ENCODE measurements at regions of chr19 and their contacts with region 1.

Region 1: DNA sequence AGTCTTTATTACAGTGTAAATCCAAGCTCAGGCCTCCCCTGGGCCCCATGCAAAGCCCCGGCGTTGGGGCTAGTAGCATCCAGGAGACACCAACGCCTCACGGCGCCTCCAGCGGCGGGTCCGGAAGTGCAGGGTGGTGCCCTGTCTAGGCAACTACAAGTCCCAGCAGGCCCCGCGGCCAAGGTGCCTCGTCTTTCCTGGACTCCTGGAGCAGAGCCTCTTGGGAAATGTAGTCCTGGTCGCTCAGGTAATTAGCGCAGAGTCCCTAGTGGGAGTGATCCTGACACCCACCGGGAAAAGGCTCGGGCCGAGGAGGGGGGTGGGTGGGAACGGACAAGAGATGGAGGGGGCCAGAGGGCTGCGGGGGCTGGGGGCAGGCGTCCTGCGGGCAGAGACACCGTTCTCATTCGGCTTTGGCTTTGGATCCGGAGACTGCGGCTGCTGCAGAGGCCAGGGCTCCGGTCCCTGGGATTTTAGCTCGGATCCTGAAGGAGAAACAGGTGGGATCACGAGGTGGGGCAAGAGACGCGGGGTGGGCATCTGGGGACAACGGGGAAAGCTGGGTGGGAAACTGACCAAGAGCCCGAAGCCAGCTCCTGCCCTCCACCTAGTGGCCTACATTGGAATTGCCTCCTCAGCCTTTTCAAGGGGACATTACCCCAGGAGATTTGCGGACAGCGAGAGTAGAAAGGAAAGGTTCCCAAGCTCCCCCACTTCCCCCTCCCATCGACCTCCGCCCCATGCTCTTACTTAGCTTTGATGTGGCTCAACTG is 11.4 kb downstream of the RTN2 start:
- DNase-seq: peak; percentile 92 to 98 (median 95)
- H3K4me3 ChIP-seq: peak overlapping the region; percentile 94
- H3K4me3 Mint-ChIP-seq: peak overlapping the region; percentile 90 to 98 (median 94)
- H3K27ac ChIP-seq: peak overlapping the region; percentile 44
- H3K27ac Mint-ChIP-seq: peak overlapping the region in 7 of 8 donors; percentile 23 to 91 (median 78)
- H3K4me1 ChIP-seq: no peaks in the 10 kb centered on the region
- H3K4me1 Mint-ChIP-seq: peaks cover 8 to 10% (median 10%) of the 10 kb centered on the region in 3 donors
- H3K27me3 ChIP-seq: no peaks in the 10 kb centered on the region
- H3K27me3 Mint-ChIP-seq: peaks cover 0 to 10% of the 10 kb centered on the region in 2 donors

Region 2: DNA sequence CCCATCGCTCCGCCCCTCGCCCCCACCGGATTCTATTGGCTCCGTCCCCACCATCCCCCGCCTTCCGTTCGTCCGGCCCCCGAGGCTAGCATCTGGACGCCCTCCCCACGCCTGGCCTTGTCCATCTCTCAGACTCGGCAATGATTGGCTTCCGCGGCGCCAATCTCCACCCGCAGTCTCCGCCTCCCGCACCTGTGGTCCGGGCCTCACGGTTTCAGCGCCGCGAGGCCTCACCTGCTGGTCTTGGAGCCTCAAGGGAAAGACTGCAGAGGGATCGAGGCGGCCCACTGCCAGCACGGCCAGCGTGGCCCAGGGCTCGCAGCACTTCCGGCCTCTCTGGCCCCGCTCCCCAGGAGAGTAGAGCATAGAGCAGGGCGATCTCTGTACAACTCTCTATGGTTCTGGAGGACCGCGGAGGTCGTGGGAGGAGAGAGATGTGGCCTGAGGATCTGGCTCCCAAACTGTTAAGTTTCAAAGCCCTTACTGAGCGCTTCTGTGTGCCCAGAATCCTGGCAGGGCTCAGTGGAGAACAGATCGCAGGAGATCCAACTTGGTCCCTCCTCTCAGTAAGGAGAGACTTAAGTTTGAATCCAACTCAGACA is 61.8 kb before region 1 on chr19 and contains the start of gene ERCC1:
- CTCF ChIA-PET with region 1: interaction called, 75 read pairs
- POLR2A ChIA-PET with region 1: interaction called, 6 read pairs
- DNase-seq: peak in 3 of 5 donors; percentile 81 to 88 (median 86)
- H3K4me3 ChIP-seq: peak within 1 kb of the TSS; percentile 80
- H3K4me3 Mint-ChIP-seq: peak within 1 kb of the TSS; percentile 85 to 99 (median 91)
- H3K27ac ChIP-seq: peak within 1 kb of the TSS; percentile 79
- H3K27ac Mint-ChIP-seq: peak within 1 kb of the TSS; percentile 63 to 97 (median 92)
- H3K4me1 ChIP-seq: peaks cover 26% of the 10 kb centered on the region
- H3K4me1 Mint-ChIP-seq: peaks cover 41 to 65% (median 46%) of the 10 kb centered on the region in 3 donors
- H3K27me3 ChIP-seq: no peaks in the 10 kb centered on the region
- H3K27me3 Mint-ChIP-seq: peaks cover 0 to 2% of the 10 kb centered on the region in 2 donors
- total RNA-seq, gene ERCC1: 75.7 to 82.6 TPM

Region 3: DNA sequence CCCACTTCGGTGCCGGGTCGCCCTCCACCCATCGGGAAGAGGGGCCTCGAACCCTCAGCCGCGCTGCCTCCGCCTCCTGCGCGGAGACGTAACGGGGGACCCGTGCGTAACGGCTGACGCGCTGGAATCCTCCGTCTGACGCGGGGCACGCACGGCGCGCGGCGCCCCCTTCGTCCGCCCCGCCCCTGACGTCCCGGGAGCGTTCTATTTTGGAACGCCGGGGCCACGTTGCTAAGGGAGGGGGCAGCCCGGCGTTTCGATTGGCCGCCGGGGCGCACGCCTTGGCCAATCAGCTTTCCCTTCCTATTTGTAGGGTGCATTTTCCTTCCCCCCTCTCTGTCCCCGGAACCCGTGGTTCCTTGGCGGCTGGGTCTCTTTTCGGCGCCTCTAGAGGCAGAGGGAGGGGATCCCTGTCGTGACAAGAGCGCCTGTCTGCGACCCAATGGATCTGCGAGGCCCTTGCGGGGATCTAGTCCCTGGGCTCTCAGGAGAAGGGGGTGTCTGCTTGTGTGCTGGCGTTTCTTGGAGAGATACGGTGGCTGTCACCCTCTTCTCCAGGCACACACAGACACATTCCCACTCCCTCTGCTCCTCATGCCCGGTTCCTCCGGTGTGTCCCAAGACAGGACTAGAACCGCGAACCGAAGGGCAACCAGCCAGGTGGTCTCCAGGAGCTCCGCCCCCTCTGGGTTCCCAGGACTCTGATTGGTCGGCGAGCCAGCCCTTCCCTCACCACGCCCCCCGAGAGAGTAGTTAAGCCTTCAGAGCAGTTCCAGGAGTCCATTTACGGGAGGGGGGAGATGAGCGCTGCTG is 16.2 kb before region 1 on chr19:
- CTCF ChIA-PET with region 1: interaction called, 24 read pairs
- POLR2A ChIA-PET with region 1: interaction called, 6 read pairs
- DNase-seq: peak; percentile 78 to 98 (median 93)
- H3K4me3 ChIP-seq: peak overlapping the region; percentile 96
- H3K4me3 Mint-ChIP-seq: peak overlapping the region; percentile 93 to 99 (median 95)
- H3K27ac ChIP-seq: peak overlapping the region; percentile 100
- H3K27ac Mint-ChIP-seq: peak overlapping the region; percentile 98 to 99 (median 99)
- H3K4me1 ChIP-seq: peaks cover 18% of the 10 kb centered on the region
- H3K4me1 Mint-ChIP-seq: peaks cover 26 to 53% (median 29%) of the 10 kb centered on the region in 3 donors
- H3K27me3 ChIP-seq: no peaks in the 10 kb centered on the region
- H3K27me3 Mint-ChIP-seq: peaks cover 10 to 61% of the 10 kb centered on the region in 2 donors

Region 4: DNA sequence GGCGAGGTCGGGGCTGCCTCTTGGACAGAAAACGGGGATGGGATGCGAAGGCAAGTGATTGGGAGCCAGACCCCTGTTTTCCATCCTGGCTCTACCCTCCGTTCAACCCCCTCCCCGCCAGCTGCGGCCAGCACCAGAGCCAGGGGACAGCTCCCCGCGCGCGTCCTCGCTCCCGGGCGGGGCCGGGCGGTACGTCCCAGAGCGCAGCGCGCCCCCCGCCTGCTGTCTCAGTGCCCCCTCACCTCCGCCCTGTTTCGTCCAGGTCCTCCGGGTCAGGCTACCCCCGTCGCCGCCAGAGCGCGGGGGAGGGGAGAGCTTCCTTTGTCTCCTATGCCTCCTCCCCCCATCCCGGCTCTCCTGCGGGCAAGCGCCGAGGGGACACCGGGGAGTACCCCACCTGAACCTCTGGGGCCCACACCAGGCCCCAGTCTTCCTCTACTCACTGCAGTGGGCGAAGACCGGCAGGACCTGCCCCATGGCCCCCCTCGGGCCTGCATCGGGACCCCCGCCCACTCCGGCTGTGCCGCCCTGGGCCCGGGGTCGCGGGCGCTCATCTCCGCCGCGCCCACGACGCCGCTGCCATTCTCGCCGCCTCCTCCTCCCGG is 11.0 kb after region 1 on chr19:
- CTCF ChIA-PET with region 1: interaction called, 47 read pairs
- POLR2A ChIA-PET with region 1: interaction called, 3 read pairs
- DNase-seq: peak in 3 of 5 donors; percentile 38 to 71 (median 62)
- H3K4me3 ChIP-seq: peak overlapping the region; percentile 47
- H3K4me3 Mint-ChIP-seq: peak overlapping the region; percentile 33 to 90 (median 82)
- H3K27ac ChIP-seq: no peak overlapping the region
- H3K27ac Mint-ChIP-seq: peak overlapping the region in 3 of 8 donors; percentile 43 to 81 (median 53)
- H3K4me1 ChIP-seq: peaks cover 41% of the 10 kb centered on the region
- H3K4me1 Mint-ChIP-seq: peaks cover 31 to 48% (median 46%) of the 10 kb centered on the region in 3 donors
- H3K27me3 ChIP-seq: peaks cover 15% of the 10 kb centered on the region
- H3K27me3 Mint-ChIP-seq: peaks cover 14 to 22% of the 10 kb centered on the region in 2 donors

Region 5: DNA sequence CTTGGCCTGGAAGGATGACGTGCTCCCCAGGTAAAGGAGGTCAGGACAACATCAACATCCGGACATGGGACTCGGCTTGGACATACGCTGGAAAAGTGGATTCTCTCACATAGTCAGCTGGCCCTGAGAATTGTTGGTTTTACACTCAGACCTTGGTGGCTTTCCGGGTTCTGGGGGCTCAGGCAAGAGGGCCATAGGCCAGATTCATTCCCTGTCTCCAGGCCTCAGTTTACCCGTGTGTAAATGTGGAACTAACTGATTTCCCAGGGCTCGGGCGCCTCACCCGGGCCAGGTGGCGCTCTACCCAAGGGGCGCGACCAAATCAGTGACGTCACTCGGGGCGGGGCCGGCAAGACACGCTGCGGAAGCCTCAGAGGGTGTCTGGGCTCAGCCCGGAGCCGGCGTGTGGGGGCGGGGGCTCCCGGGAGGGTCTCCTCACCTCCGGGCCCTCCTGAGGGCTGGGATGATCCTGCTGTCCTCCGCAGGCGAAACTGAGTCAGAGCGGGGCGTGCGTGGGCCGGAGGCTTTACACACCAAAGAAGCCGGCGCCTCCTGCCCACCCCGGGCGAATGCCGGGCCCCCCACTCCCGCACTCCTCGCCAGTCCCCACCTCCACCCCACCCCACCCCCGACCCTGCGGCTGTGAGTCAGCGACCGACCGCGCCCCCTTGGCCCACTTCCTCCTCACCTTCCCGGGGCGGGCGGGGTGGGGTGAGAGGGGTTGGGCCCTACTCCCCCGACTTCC is 20.9 kb after region 1 on chr19:
- CTCF ChIA-PET with region 1: interaction called, 10 read pairs
- POLR2A ChIA-PET with region 1: interaction called, 3 read pairs
- DNase-seq: peak; percentile 95 to 99 (median 97)
- H3K4me3 ChIP-seq: peak overlapping the region; percentile 98
- H3K4me3 Mint-ChIP-seq: peak overlapping the region; percentile 90 to 100 (median 96)
- H3K27ac ChIP-seq: peak overlapping the region; percentile 97
- H3K27ac Mint-ChIP-seq: peak overlapping the region; percentile 90 to 100 (median 98)
- H3K4me1 ChIP-seq: peaks cover 31% of the 10 kb centered on the region
- H3K4me1 Mint-ChIP-seq: peaks cover 35 to 46% (median 40%) of the 10 kb centered on the region in 3 donors
- H3K27me3 ChIP-seq: no peaks in the 10 kb centered on the region
- H3K27me3 Mint-ChIP-seq: peaks cover 0 to 2% of the 10 kb centered on the region in 2 donors

Region 6: GRCh38 chr19:45517641-45518468 is 32.4 kb after region 1 on chr19:
- CTCF ChIA-PET with region 1: no interaction called
- POLR2A ChIA-PET with region 1: no interaction called
- DNase-seq: no peak
- H3K4me3 ChIP-seq: no peak overlapping the region
- H3K4me3 Mint-ChIP-seq: no peak overlapping the region
- H3K27ac ChIP-seq: no peak overlapping the region
- H3K27ac Mint-ChIP-seq: peak overlapping the region in 3 of 8 donors; percentile 51 to 72 (median 60)
- H3K4me1 ChIP-seq: peaks cover 35% of the 10 kb centered on the region
- H3K4me1 Mint-ChIP-seq: peaks cover 30 to 41% (median 30%) of the 10 kb centered on the region in 3 donors
- H3K27me3 ChIP-seq: no peaks in the 10 kb centered on the region
- H3K27me3 Mint-ChIP-seq: no peaks in the 10 kb centered on the region

Region 7: DNA sequence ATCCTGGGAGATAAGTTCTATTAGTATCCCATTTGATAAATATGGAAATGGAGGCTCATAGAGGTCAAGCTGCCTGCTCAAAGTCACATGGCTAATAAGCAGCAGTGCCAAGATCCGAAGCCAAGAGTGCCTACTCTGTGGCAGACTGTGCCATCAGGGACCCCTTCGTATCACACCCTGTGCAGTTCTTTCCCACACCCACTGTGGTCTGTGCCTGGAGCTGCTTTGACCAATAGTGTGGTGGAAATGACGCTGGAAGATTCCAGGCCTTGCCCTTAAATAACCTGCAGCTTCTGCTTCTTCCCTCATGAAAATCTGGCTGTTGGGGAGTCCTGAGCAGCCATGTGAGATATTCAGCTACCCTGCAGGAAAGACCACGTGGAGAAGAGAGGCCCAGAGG is 89.0 kb after region 1 on chr19:
- CTCF ChIA-PET with region 1: no interaction called
- POLR2A ChIA-PET with region 1: no interaction called
- DNase-seq: no peak
- H3K4me3 ChIP-seq: no peak overlapping the region
- H3K4me3 Mint-ChIP-seq: no peak overlapping the region
- H3K27ac ChIP-seq: no peak overlapping the region
- H3K27ac Mint-ChIP-seq: no peak overlapping the region
- H3K4me1 ChIP-seq: no peaks in the 10 kb centered on the region
- H3K4me1 Mint-ChIP-seq: peaks cover 9 to 18% (median 16%) of the 10 kb centered on the region in 3 donors
- H3K27me3 ChIP-seq: no peaks in the 10 kb centered on the region
- H3K27me3 Mint-ChIP-seq: peaks cover 0 to 1% of the 10 kb centered on the region in 2 donors